ENCODE measurements at regions of chr2 and their contacts with region 1.

Region 1: DNA sequence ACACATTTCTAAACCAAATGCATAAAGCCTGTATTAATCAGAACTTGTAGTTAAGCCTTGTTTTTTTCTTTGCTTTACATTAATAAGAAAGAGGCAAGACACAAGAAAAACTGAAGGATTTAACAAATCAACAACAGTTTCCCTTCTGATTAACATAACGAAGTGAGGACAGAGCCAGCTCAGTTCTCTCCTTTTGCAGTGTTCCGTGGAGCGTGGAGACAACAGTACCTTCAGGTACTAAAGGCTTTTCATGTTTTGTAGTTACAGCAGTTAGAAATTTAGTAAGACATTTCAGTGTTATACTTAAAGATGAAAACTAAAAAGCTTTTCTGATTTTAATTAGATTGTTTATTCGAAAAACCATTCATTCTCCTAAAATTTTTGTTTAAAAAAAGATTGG is 115.2 kb downstream of the FMNL2 start:
- DNase-seq: no peak
- H3K4me3 ChIP-seq: no peak overlapping the region
- H3K27ac ChIP-seq: no peak overlapping the region
- H3K4me1 ChIP-seq: no peaks in the 10 kb centered on the region
- H3K27me3 ChIP-seq: no peaks in the 10 kb centered on the region
- CTCF ChIP-seq: no peak
- POLR2A ChIP-seq: no peak

Region 2: GRCh38 chr2:152410165-152410597 is 40.0 kb before region 1 on chr2:
- intact Hi-C with region 1: loop called (anchors 2 kb)
- DNase-seq: no peak
- H3K4me3 ChIP-seq: no peak overlapping the region
- H3K27ac ChIP-seq: no peak overlapping the region
- H3K4me1 ChIP-seq: peaks cover 0 to 10% of the 10 kb centered on the region in 2 donors
- H3K27me3 ChIP-seq: no peaks in the 10 kb centered on the region
- CTCF ChIP-seq: no peak
- POLR2A ChIP-seq: no peak